Esophagus squamous epithelium (tissue), 5 donors: ENCODE measurements at regions of chr1 and their contacts with region 1.

Region 1: DNA sequence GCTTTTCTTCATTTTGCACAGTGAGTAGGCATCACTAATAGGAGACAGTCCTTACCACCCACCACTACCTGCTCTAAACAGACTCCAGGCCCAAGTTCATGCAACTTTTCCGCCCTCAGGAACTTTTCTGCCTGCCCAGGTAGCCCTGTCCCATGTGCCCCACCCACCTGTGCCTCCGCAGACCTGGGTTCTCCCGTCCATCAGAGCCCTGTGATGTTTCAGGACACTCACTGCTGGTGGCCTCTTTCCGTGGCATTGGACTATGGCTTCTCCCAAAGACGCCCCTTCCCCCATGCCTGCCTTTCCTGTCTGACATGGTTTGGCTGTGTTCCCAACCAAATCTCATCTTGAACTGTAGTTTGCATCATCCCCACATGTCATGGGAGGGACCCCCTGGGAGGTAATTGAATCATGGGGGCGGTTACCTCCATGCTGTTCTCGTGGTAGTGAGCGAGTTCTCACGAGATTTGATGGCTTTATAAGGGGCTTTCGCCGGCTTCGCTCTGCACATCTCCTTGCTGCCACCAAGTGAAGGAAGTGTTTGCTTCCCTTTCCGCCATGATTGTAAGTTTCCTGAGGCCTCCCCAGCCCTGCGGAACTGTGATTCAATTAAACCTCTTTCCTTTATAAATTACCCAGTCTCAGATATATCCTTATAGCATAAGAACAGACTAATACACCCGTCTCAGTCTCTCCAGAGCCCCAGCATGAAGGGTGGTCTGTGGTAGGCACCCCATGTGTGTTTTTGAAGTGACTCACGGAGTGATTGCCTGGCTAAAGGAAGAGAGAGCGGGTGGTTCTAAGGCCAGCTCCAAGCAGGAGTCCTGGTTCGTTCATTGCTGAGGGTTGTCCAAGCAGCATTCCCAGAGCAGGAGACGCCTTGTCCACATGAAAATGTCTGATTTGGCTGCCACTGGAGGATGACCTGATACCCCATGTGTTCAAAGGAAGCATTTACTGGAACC is 86.0 kb upstream of the ZBTB40 start:
- DNase-seq: no peak
- H3K4me3 ChIP-seq: no peak overlapping the region
- H3K27ac ChIP-seq: no peak overlapping the region
- H3K4me1 ChIP-seq: no peaks in the 10 kb centered on the region
- H3K27me3 ChIP-seq: peaks cover 0 to 86% (median 0%) of the 10 kb centered on the region in 4 donors
- CTCF ChIP-seq: no peak
- POLR2A ChIP-seq: no peak

Region 2: GRCh38 chr1:22296701-22297591 is 68.7 kb before region 1 on chr1:
- intact Hi-C with region 1: no loop called
- DNase-seq: no peak
- H3K4me3 ChIP-seq: no peak overlapping the region
- H3K27ac ChIP-seq: peak overlapping the region in 1 of 4 donors; percentile 10
- H3K4me1 ChIP-seq: peaks cover 0 to 12% (median 4%) of the 10 kb centered on the region in 3 donors
- H3K27me3 ChIP-seq: peaks cover 0 to 32% (median 0%) of the 10 kb centered on the region in 4 donors
- CTCF ChIP-seq: no peak
- POLR2A ChIP-seq: no peak

Region 3: GRCh38 chr1:22331618-22332423 is 33.8 kb before region 1 on chr1:
- intact Hi-C with region 1: loop called (anchors 2 kb)
- DNase-seq: no peak
- H3K4me3 ChIP-seq: no peak overlapping the region
- H3K27ac ChIP-seq: no peak overlapping the region
- H3K4me1 ChIP-seq: no peaks in the 10 kb centered on the region
- H3K27me3 ChIP-seq: peaks cover 0 to 52% (median 0%) of the 10 kb centered on the region in 4 donors
- CTCF ChIP-seq: no peak
- POLR2A ChIP-seq: no peak

Region 4: GRCh38 chr1:22500471-22500870 is 134.9 kb after region 1 on chr1:
- intact Hi-C with region 1: no loop called
- DNase-seq: no peak
- H3K4me3 ChIP-seq: no peak overlapping the region
- H3K27ac ChIP-seq: no peak overlapping the region
- H3K4me1 ChIP-seq: peaks cover 0 to 16% (median 6%) of the 10 kb centered on the region in 3 donors
- H3K27me3 ChIP-seq: no peaks in the 10 kb centered on the region
- CTCF ChIP-seq: no peak
- POLR2A ChIP-seq: no peak